ENCODE measurements at regions of chr2 and their contacts with region 1.

Region 1: DNA sequence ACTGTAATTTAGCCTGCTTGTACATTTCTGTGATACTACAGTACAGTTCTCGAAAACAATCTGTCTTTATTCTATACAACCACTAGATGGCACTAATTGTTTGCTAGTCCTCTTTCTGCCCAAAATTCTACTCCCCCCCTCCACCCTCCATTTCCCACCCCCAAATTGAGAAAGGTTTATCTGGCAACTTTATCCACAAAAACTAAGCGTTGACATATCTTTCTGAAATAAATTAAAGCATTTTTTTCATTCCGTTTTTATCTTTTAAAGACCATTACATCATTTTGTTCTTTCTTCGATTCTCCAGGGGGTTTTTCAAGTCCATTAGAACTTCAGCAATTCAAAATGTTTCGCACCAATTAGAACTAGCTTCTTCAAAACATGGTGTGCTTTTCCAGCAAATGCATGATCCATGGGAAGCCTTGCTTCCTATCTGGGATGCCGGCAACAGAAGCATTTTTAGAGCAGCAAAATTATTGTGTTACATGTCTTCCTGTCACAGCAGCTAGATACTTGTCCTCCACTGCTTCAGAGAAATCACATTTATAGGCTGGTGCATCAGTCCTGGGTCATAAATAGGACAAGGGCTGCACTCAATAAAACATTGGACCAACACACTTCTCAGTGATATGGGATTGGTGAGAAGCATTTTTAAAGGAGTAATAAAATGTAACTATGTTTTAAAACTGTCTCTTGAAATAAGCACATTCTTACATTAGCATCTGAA is 241.3 kb downstream of the PAX3 start:
- DNase-seq: peak; percentile 52
- H3K4me3 ChIP-seq: no peak overlapping the region
- H3K27ac ChIP-seq: no peak overlapping the region
- H3K4me1 ChIP-seq: no peaks in the 10 kb centered on the region
- H3K27me3 ChIP-seq: peaks cover 80% of the 10 kb centered on the region

Region 2: DNA sequence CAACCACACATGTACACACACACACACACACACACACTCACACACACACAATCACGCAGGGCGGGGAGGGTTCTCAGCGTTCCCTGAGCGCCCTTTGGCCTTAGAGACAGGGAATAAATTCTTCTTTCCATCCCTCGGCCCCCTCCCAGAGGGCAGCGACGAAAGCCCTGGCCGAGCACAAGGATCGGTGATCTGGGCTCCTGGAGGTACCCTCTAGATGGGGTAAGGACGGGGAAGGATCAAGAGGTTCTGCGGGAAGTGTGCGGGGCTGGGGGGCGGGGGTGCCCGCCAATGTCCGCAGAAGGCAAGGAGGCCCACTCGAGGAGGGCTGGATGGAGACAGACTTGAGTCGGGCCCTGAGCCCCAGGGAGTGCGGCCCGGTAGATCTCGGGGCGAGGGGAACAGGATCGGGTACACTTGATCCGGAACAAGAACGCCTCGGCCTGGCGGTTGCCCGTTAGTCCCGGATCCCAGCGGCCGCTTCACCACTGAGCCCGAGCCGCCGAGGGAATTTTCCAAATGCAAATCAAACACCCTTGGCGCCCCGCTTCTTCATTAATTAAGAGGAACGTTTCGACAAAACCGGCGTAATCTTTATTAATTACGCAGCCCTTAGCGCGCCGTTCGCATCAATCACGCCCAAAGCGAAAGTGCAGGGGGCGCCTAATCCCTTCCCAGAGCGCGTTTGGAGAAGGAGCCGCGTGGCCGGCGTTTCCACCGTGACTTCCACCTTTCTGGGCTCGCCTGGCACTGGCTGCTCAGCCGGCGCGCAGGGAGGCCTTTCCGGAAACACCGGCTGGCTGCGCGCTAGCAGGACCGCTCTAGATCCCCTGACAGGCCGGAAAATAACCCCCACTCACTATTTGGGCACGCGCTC is 248.2 kb after region 1 on chr2:
- in situ Hi-C with region 1: no loop called
- DNase-seq: peak; percentile 37
- H3K4me3 ChIP-seq: peak overlapping the region; percentile 72
- H3K27ac ChIP-seq: no peak overlapping the region
- H3K4me1 ChIP-seq: no peaks in the 10 kb centered on the region
- H3K27me3 ChIP-seq: peaks cover 100% of the 10 kb centered on the region

Region 3: GRCh38 chr2:222561817-222562645 is 504.5 kb after region 1 on chr2:
- in situ Hi-C with region 1: loop called (anchors 25 kb)
- DNase-seq: peak; percentile 49
- H3K4me3 ChIP-seq: no peak overlapping the region
- H3K27ac ChIP-seq: no peak overlapping the region
- H3K4me1 ChIP-seq: no peaks in the 10 kb centered on the region
- H3K27me3 ChIP-seq: no peaks in the 10 kb centered on the region; the same call in 1 of the 2 replicates